K562 (cell line): ENCODE measurements at regions of chr20 and their contacts with region 1.

Region 1: DNA sequence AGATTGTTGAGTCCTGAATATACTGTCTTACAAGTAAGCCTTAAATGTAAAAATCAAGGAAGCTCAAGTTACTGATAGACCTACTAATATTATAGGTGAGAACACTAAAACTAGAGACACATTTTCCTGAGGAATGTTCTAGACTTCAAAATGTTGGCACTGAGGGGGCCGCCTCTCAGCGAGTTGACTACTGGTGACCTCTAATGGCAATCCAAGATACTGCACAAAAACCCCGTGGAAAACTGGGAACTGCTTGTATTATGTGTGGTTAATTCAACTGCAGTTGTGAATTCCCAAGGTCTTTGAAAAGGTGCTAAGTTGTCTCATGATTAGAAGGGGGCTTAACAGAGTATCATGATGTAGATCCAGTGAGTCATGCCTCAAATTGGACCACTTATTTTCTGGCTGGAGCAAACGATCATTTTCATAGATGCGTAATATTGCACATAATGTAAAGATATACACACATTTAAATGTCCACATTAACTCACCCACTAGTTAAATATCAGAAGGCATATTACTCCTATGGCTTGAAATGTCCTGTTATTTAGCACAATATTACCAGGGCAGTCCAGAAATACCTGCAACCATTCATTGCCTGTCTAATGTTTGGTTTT is 336.2 kb downstream of the FOXA2 start:
- DNase-seq: peak in 2 of 4 experiments; percentile 13 to 14
- ATAC-seq: 0 out of 3 replicates have a peak, but pooled peaks have one; percentile 57
- H3K4me3 ChIP-seq: no peak overlapping the region
- H3K27ac ChIP-seq: no peak overlapping the region
- H3K4me1 ChIP-seq: no peaks in the 10 kb centered on the region
- H3K27me3 ChIP-seq: no peaks in the 10 kb centered on the region
- CTCF ChIP-seq: peak; percentile 44 to 70 (median 53)
- EP300 ChIP-seq: no peak
- POLR2A ChIP-seq: no peak
- RAD21 ChIP-seq: peak in 1 of 2 experiments; percentile 50; a peak in 3 of 4 replicates

Region 2: DNA sequence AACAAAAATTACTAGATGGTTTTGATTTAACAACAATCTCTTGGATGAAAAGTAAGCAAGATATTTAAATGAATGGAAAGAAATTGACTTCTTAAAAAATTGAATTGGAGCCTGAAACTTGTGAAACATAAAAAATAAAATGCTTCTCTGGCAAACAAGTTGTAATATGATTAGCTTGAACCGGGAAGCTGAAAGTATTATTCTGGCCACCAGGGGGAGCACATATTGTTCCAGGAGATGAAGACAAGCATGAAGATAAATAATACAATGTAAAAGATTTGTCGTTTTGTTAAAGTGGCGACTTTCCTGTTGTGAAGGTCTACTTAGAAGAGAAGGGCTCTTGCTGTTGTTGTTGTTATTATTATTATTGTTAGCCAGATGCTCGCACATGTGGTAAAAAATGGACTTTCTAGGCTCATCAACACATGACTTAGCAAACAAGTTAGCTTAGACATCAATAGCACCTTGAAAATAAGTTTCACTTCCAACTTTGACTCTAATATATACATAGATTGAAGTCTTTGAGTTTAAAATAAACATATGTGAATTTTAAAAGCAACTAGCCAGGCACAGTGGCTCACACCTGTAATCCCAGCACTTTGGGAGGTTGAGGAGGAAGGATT is 528.5 kb before region 1 on chr20:
- CTCF ChIA-PET with region 1: no interaction called
- POLR2A ChIA-PET with region 1: no interaction called
- in situ Hi-C with region 1: no loop called
- intact Hi-C with region 1: loop called (anchors 1 kb)
- DNase-seq: peak; percentile 41 to 53 (median 47)
- ATAC-seq: 0 out of 3 replicates have a peak, but pooled peaks have one; percentile 51
- H3K4me3 ChIP-seq: no peak overlapping the region
- H3K27ac ChIP-seq: no peak overlapping the region
- H3K4me1 ChIP-seq: no peaks in the 10 kb centered on the region
- H3K27me3 ChIP-seq: peaks cover 0 to 9% of the 10 kb centered on the region in 2 experiments; a peak in 2 of 5 replicates
- CTCF ChIP-seq: peak; percentile 39 to 63 (median 53); a peak in 5 of 6 replicates
- EP300 ChIP-seq: no peak
- POLR2A ChIP-seq: no peak
- RAD21 ChIP-seq: peak in 1 of 2 experiments; percentile 54; a peak in 2 of 4 replicates

Region 3: GRCh38 chr20:21808863-21809664 is 439.1 kb before region 1 on chr20:
- CTCF ChIA-PET with region 1: no interaction called
- POLR2A ChIA-PET with region 1: no interaction called
- in situ Hi-C with region 1: no loop called
- intact Hi-C with region 1: loop called (anchors 5 kb)
- DNase-seq: peak; percentile 55 to 73 (median 72)
- ATAC-seq: peak; percentile 90
- H3K4me3 ChIP-seq: no peak overlapping the region
- H3K27ac ChIP-seq: no peak overlapping the region
- H3K4me1 ChIP-seq: peaks cover 0 to 6% of the 10 kb centered on the region in 2 experiments; a peak in 1 of 5 replicates
- H3K27me3 ChIP-seq: peaks cover 0 to 10% of the 10 kb centered on the region in 2 experiments; a peak in 1 of 5 replicates
- CTCF ChIP-seq: peak; percentile 58 to 69 (median 65)
- EP300 ChIP-seq: no peak
- POLR2A ChIP-seq: no peak
- RAD21 ChIP-seq: peak; percentile 13 to 50; a peak in 2 of 4 replicates

Region 4: DNA sequence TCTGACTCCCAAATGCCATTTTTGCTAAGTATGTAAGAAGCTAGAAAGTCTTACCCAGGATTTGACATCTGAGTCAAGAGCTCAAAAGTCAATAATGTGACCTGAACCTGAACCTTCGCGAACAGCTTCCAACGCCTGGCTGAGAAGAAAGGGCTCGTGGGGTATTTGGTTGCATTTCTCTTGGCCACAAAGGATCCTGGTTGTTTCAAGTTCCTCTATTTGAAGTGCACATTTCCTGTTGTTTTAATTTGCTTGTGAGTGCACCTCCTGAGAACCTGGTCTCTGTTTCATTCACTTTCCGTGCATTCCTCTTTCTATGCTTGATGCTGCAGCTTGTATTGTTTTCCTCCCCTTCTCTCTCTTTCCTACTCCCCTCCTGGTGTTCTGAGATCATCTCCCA is 123.7 kb after region 1 on chr20:
- CTCF ChIA-PET with region 1: no interaction called
- POLR2A ChIA-PET with region 1: no interaction called
- in situ Hi-C with region 1: no loop called
- intact Hi-C with region 1: no loop called
- DNase-seq: no peak
- ATAC-seq: no peak
- H3K4me3 ChIP-seq: no peak overlapping the region
- H3K27ac ChIP-seq: no peak overlapping the region
- H3K4me1 ChIP-seq: no peaks in the 10 kb centered on the region
- H3K27me3 ChIP-seq: no peaks in the 10 kb centered on the region
- CTCF ChIP-seq: no peak
- EP300 ChIP-seq: no peak
- POLR2A ChIP-seq: no peak
- RAD21 ChIP-seq: no peak